ENCODE measurements at regions of chr3 and their contacts with region 1.

Region 1: DNA sequence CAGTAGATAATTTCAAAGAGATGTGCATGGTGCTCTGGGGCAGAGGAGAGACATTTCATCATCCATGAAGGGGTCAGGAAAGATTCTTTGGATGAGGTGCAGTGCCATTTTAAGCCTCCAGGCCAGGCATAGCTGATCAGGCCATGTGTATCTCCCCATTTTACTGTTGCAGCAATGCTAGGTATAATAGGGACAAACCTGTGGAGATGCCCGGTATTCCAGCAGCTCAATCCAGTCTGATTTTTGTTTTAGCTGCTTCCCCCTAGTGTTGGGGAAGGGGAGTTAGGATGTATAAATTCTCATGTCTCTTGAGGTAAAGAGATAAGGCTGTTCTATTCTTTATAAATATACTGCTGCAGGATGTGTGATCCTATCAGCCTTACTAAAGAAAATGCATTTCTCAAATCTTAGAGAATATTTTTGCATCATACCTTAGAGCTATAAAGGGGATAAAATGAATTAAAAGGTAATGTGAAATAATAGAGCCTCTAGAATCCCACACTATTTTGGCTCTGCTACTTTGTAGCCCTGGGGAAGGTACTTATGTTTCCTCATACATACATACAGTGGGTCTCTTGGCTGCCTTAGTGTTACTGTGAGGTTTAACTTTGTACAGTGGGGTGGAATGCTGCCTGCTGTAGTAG is 5.2 kb downstream of the CDV3 start:
- DNase-seq: peak; percentile 55
- ATAC-seq: no peak
- H3K4me3 ChIP-seq: no peak overlapping the region
- H3K27ac ChIP-seq: no peak overlapping the region
- H3K4me1 ChIP-seq: 0 out of 2 replicates have a peak, but pooled peaks cover 1% of the 10 kb centered on the region
- H3K27me3 ChIP-seq: no peaks in the 10 kb centered on the region
- CTCF ChIP-seq: peak; percentile 63
- POLR2A ChIP-seq: peak; percentile 41; the same call in 1 of the 2 replicates
- RAD21 ChIP-seq: peak; percentile 60

Region 2: DNA sequence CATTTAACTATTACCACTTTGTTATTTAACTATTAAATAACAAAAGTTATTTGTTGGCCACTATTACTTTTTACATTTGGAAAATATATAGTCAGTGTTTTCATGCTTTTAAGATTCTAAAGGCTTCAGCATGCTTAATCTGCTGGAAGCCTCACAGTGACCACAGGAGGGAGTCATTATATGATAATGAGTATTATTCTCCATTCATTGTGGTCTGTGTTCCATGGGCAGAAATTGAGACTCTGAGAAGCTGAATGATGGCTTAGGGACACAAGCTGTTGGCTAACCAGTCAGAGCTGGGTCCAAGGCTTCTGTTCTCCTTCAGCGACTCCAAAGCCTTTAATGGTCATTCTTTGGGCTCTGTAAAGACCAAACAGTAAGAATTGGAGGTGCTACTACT is 114.1 kb before region 1 on chr3:
- CTCF ChIA-PET with region 1: interaction called, 3 read pairs
- POLR2A ChIA-PET with region 1: interaction called, 3 read pairs
- dilution Hi-C with region 1: no loop called
- in situ Hi-C with region 1: loop called (anchors 5 kb)
- intact Hi-C with region 1: loop called (anchors 2 kb)
- DNase-seq: peak; percentile 56
- ATAC-seq: peak; percentile 73
- H3K4me3 ChIP-seq: no peak overlapping the region
- H3K27ac ChIP-seq: no peak overlapping the region
- H3K4me1 ChIP-seq: 0 out of 2 replicates have a peak, but pooled peaks cover under 1% of the 10 kb centered on the region
- H3K27me3 ChIP-seq: 0 out of 2 replicates have a peak, but pooled peaks cover 2% of the 10 kb centered on the region
- CTCF ChIP-seq: peak; percentile 54
- POLR2A ChIP-seq: no peak
- RAD21 ChIP-seq: peak; percentile 59

Region 3: DNA sequence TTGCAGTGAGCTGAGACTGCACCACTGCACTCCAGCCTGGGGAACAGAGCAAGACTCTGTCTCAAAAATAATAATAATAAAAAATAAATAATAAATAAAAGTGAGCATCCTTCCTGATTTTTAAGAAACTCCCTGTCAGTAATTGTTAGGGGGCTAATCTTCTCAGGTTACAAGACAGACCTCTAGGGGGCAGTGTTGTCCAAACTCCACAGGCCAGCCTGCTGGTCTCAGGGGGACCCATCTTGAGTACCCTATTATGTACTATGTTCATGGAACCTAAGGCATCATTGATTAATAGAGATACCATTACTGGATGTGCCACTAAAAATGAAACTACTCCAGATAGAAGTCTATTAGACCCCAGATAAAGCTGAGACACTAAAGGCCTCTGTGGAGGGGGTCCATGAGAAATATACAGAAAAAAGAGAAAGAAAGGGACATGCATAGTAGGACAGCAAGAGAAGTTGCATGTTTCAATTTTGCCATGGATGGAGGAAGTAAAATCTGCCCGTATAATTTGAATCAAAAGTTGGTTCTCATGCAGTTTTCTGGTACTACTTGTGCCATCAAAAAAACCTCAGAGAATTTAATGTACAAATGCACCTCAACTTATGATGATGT is 90.6 kb before region 1 on chr3:
- CTCF ChIA-PET with region 1: interaction called, 4 read pairs
- POLR2A ChIA-PET with region 1: interaction called, 3 read pairs
- dilution Hi-C with region 1: no loop called
- in situ Hi-C with region 1: no loop called
- intact Hi-C with region 1: loop called (anchors 2 kb)
- DNase-seq: peak; percentile 27
- ATAC-seq: no peak
- H3K4me3 ChIP-seq: no peak overlapping the region
- H3K27ac ChIP-seq: no peak overlapping the region
- H3K4me1 ChIP-seq: no peaks in the 10 kb centered on the region; the same call in 1 of the 2 replicates
- H3K27me3 ChIP-seq: no peaks in the 10 kb centered on the region
- CTCF ChIP-seq: peak; percentile 53
- POLR2A ChIP-seq: no peak
- RAD21 ChIP-seq: peak; percentile 63

Region 4: DNA sequence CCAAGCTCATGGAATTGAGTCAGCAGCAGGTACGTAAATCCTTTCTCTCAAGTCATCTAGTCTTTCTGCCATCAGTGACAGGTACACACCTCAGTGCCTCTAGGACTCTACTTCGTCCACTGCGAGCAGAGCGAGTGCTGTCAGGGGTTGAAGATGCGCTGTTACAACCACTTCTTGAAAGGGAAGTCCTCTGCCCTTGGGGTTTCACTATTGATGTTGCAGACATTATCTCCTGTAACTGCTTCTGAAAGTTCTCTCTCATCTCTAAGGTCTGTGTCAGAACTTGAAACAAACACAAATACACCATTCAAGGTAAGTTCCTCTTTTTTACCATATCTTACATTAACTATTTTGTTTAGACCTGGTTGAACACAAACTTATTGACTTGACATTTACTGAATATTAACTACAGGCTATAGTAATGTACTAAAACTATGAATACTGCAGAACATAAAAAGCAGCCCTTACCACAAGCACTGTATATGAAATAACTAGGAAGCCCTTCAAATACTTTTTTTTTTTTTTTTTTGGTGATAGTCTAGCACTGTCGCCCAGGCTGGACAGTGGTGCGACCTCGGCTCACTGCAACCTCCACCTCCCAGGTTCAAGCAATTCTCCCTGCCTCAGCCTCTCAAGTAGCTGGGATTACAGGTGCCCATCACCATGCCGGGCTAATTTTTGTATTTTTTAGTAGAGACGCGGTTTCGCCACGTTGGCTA is 41.6 kb after region 1 on chr3:
- CTCF ChIA-PET with region 1: no interaction called
- POLR2A ChIA-PET with region 1: no interaction called
- dilution Hi-C with region 1: no loop called
- in situ Hi-C with region 1: no loop called
- intact Hi-C with region 1: no loop called
- DNase-seq: no peak
- ATAC-seq: no peak
- H3K4me3 ChIP-seq: no peak overlapping the region
- H3K27ac ChIP-seq: no peak overlapping the region
- H3K4me1 ChIP-seq: no peaks in the 10 kb centered on the region; the same call in 1 of the 2 replicates
- H3K27me3 ChIP-seq: no peaks in the 10 kb centered on the region
- CTCF ChIP-seq: no peak
- POLR2A ChIP-seq: no peak
- RAD21 ChIP-seq: no peak

Measured in IMR-90 (cell line).